PC-3 (cell line): ENCODE measurements at regions of chr12 and their contacts with region 1.

Region 1: GRCh38 chr12:104108755-104109445 is 29.1 kb downstream of the NFYB start:
- DNase-seq: peak; percentile 94
- ATAC-seq: peak; percentile 99
- H3K4me3 ChIP-seq: no peak overlapping the region
- H3K27ac ChIP-seq: no peak overlapping the region
- H3K4me1 ChIP-seq: no peaks in the 10 kb centered on the region
- H3K27me3 ChIP-seq: no peaks in the 10 kb centered on the region
- CTCF ChIP-seq: peak; percentile 98

Region 2: GRCh38 chr12:103444983-103445382 is 663.9 kb before region 1 on chr12:
- CTCF ChIA-PET with region 1: no interaction called
- POLR2A ChIA-PET with region 1: no interaction called
- intact Hi-C with region 1: no loop called
- DNase-seq: no peak
- ATAC-seq: no peak
- H3K4me3 ChIP-seq: no peak overlapping the region
- H3K27ac ChIP-seq: no peak overlapping the region
- H3K4me1 ChIP-seq: no peaks in the 10 kb centered on the region
- H3K27me3 ChIP-seq: peaks cover 35% of the 10 kb centered on the region; the same call in 1 of the 2 replicates
- CTCF ChIP-seq: no peak

Region 3: DNA sequence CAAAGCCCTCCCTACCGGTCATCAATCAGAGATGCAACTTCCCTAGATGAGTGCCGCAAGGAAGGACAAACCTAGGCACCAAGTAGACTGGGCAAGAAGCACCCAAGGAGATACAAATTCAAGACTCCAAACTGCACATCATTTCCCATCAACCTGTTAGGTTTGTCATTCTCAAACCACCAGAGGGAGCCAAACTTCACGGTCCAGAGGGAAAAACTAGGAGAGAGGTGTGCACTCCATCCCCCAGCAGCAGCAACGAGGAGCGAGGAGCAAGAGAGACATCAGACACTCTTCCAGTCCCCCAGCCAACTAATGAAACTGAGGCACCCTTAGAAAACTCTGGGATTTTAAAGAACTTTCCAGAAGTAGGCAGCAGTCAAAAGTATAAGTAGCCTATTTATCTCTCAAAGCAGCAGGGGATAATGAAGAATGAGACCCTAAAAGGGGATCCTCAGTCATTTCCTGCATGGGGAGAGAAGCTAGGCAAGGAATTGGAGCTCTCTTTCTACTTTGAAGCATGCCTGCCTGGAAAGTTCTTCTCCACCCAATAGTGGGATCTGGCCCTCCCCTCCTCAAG is 230.9 kb before region 1 on chr12:
- CTCF ChIA-PET with region 1: no interaction called
- POLR2A ChIA-PET with region 1: no interaction called
- intact Hi-C with region 1: loop called (anchors 1 kb)
- DNase-seq: peak; percentile 94
- ATAC-seq: peak; percentile 73
- H3K4me3 ChIP-seq: 0 out of 2 replicates have a peak overlapping the region, but pooled peaks have one; percentile 25
- H3K27ac ChIP-seq: no peak overlapping the region
- H3K4me1 ChIP-seq: peaks cover 27% of the 10 kb centered on the region
- H3K27me3 ChIP-seq: no peaks in the 10 kb centered on the region
- CTCF ChIP-seq: peak; percentile 95

Region 4: DNA sequence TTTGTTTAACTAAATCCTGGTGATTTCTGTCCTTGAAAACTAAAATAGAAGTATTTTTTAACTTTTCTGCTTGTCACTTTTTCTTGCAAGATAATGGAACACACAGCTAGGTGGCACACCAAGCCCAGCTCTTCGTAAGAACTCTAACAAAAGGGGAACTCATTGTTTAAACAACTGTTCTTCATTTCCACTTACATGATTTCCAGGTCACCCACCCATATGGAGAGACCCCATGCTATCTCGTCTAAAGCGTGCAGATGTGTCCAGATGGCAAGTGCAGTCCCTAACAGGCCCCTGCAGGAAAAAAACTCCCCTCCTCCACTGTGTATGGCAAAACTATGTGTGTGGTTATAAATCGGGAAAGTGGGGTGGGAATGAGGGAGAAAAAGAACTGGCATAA is 224.6 kb before region 1 on chr12:
- CTCF ChIA-PET with region 1: interaction called, 10 read pairs
- POLR2A ChIA-PET with region 1: no interaction called
- intact Hi-C with region 1: loop called (anchors 1 kb)
- DNase-seq: peak; percentile 60
- ATAC-seq: no peak
- H3K4me3 ChIP-seq: no peak overlapping the region
- H3K27ac ChIP-seq: no peak overlapping the region
- H3K4me1 ChIP-seq: peaks cover 29% of the 10 kb centered on the region
- H3K27me3 ChIP-seq: no peaks in the 10 kb centered on the region
- CTCF ChIP-seq: peak; percentile 83

Region 5: GRCh38 chr12:103930034-103930786 is 178.7 kb before region 1 on chr12 and contains the start of gene HSP90B1:
- CTCF ChIA-PET with region 1: no interaction called
- POLR2A ChIA-PET with region 1: interaction called, 16 read pairs
- intact Hi-C with region 1: no loop called
- DNase-seq: peak; percentile 100
- ATAC-seq: peak; percentile 74
- H3K4me3 ChIP-seq: peak within 1 kb of the TSS; percentile 92
- H3K27ac ChIP-seq: peak within 1 kb of the TSS; percentile 78
- H3K4me1 ChIP-seq: peaks cover 43% of the 10 kb centered on the region
- H3K27me3 ChIP-seq: no peaks in the 10 kb centered on the region
- CTCF ChIP-seq: no peak
- total RNA-seq, gene HSP90B1: 476 and 593 TPM in 2 replicates

Region 6: DNA sequence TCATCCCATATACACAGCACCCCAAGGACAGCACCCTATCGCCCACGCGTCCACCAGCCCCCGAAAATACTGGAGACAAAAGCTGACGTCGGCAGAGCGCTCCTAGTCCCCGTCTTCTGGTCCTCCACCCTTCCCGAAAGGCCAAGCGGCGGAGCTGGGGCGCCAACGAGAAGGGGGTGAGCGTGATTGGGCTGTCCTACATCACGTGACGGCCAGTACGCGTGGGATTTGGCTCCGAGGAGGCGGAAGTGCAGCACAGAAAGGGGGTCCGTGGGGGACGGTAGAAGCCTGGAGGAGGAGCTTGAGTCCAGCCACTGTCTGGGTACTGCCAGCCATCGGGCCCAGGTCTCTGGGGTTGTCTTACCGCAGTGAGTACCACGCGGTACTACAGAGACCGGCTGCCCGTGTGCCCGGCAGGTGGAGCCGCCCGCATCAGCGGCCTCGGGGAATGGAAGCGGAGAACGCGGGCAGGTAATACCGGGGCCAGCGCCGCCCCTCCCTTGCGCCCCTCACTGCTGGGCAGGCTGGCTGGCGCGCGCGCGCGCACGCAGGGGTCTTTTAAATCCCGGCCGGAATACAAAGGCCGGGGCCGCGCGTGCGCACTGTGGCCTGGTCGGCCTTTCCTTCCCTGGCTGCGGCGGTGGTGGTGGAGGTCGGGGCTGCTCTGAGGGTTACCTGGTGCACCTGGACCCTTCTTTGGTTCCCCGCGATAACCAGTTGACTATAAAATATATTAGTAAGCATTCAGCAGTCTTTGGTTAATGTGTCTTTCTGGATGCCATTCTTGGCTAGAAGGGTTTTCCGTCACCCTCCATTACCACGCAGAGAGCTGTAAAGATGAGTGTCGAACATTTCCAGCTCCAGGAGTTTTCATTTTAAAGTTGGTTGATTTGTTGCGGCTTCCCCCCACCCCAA is 143.1 kb before region 1 on chr12 and contains the start of gene TDG:
- CTCF ChIA-PET with region 1: no interaction called
- POLR2A ChIA-PET with region 1: no interaction called
- intact Hi-C with region 1: loop called (anchors 2 kb)
- DNase-seq: peak; percentile 99
- ATAC-seq: peak; percentile 95
- H3K4me3 ChIP-seq: peak within 1 kb of the TSS; percentile 91
- H3K27ac ChIP-seq: peak within 1 kb of the TSS; percentile 72
- H3K4me1 ChIP-seq: peaks cover 36% of the 10 kb centered on the region
- H3K27me3 ChIP-seq: no peaks in the 10 kb centered on the region
- CTCF ChIP-seq: no peak
- total RNA-seq, gene TDG: 35.0 and 45.6 TPM in 2 replicates

Region 7: GRCh38 chr12:104057771-104058197 is 51.1 kb before region 1 on chr12:
- CTCF ChIA-PET with region 1: interaction called, 13 read pairs
- POLR2A ChIA-PET with region 1: no interaction called
- intact Hi-C with region 1: loop called (anchors 1 kb)
- DNase-seq: peak; percentile 55
- ATAC-seq: peak; percentile 63
- H3K4me3 ChIP-seq: no peak overlapping the region
- H3K27ac ChIP-seq: no peak overlapping the region
- H3K4me1 ChIP-seq: peaks cover 6% of the 10 kb centered on the region
- H3K27me3 ChIP-seq: no peaks in the 10 kb centered on the region
- CTCF ChIP-seq: peak; percentile 94

Region 8: GRCh38 chr12:104166465-104166864 is 57.6 kb after region 1 on chr12:
- CTCF ChIA-PET with region 1: no interaction called
- POLR2A ChIA-PET with region 1: no interaction called
- intact Hi-C with region 1: no loop called
- DNase-seq: no peak
- ATAC-seq: no peak
- H3K4me3 ChIP-seq: no peak overlapping the region
- H3K27ac ChIP-seq: no peak overlapping the region
- H3K4me1 ChIP-seq: no peaks in the 10 kb centered on the region
- H3K27me3 ChIP-seq: no peaks in the 10 kb centered on the region
- CTCF ChIP-seq: no peak

Region 9: DNA sequence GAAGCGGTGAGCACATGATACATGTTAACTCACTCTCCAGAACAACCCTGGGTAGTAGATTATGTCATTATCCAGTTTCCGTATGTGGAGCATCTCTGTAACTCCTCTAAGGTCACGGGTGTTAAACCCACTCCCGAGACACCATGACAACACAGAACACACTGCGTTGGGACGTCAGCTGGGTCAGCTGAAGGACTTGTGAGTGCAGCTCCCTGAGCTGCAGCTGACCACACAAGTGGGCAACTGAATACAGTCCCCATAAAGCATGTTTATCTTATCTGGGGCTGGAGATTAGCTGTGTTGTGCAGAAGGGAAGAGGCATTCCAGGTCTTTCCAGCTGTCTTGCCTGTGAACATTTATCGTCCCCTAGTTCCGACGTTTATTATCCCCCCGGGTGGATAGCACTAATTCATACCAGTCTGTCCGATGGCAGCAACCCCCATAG is 559.4 kb after region 1 on chr12:
- CTCF ChIA-PET with region 1: no interaction called
- POLR2A ChIA-PET with region 1: no interaction called
- intact Hi-C with region 1: no loop called
- DNase-seq: no peak
- ATAC-seq: no peak
- H3K4me3 ChIP-seq: no peak overlapping the region
- H3K27ac ChIP-seq: no peak overlapping the region
- H3K4me1 ChIP-seq: peaks cover 53% of the 10 kb centered on the region
- H3K27me3 ChIP-seq: no peaks in the 10 kb centered on the region
- CTCF ChIP-seq: no peak